ENCODE measurements at regions of chr20 and their contacts with region 1.

Region 1: DNA sequence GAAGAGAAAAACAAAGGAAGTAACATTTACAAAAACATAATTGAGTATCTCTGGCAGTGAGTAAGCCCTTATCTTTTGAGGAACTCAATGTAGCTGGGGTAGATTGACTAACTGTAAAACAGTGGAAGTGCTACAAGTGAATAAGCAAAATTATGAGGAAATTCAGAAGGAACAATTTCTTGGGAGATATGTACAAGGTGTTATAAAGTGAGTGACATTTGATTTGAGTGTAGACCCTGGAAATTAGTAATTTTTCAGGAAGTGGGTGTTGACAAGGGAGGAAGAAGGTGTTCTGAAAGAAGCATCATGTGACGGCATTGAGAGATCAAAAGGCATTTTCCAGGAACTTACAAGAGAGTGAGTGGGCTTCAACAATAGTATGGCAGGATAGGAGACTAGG is 22.2 kb downstream of the XRN2 start:
- H3K4me3 Mint-ChIP-seq: no peak overlapping the region
- H3K27ac Mint-ChIP-seq: peak overlapping the region; percentile 70
- H3K4me1 Mint-ChIP-seq: peaks cover 66% of the 10 kb centered on the region
- H3K27me3 Mint-ChIP-seq: no peaks in the 10 kb centered on the region

Region 2: DNA sequence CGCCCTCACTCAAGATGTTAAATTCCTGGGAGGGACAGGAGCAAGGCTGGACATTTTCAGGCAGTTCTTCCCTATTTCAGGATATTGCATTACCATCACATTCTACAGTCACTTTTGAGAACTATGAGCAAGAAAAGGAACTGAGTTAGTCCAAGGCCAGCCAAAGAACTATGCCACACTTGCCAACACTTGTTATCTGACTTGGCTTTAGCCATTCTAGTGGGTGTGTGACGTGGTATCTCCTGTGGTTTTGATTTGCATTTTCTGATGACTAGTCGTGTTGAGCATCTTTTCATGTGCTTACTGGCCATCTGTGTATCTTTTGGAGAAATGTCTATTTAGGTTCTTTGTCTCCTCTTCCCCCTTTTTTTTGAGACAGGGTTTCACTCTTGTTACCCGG is 10.2 kb before region 1 on chr20:
- intact Hi-C with region 1: loop called (anchors 1 kb)
- H3K4me3 Mint-ChIP-seq: peak overlapping the region; percentile 30
- H3K27ac Mint-ChIP-seq: peak overlapping the region; percentile 78
- H3K4me1 Mint-ChIP-seq: peaks cover 79% of the 10 kb centered on the region
- H3K27me3 Mint-ChIP-seq: no peaks in the 10 kb centered on the region